Common myeloid progenitor, CD34-positive (primary cell): ENCODE measurements at regions of chr9 and their contacts with region 1.

Region 1: GRCh38 chr9:121545875-121546423 is 46.3 kb upstream of the GGTA1 start:
- DNase-seq: peak; percentile 81 to 87 (median 85)
- H3K4me3 ChIP-seq: peak overlapping the region in 3 of 7 experiments; percentile 6 to 20 (median 11)
- H3K27ac ChIP-seq: no peak overlapping the region
- H3K4me1 ChIP-seq: peaks cover 0 to 16% (median 14%) of the 10 kb centered on the region in 4 experiments
- H3K27me3 ChIP-seq: peaks cover 0 to 5% (median 0%) of the 10 kb centered on the region in 5 experiments

Region 2: GRCh38 chr9:121557581-121558447 is 11.9 kb after region 1 on chr9:
- CTCF ChIA-PET with region 1: interaction called, 26 read pairs
- POLR2A ChIA-PET with region 1: interaction called, 9 read pairs
- DNase-seq: peak; percentile 81 to 96 (median 95)
- H3K4me3 ChIP-seq: peak overlapping the region in 4 of 7 experiments; percentile 32 to 58 (median 40)
- H3K27ac ChIP-seq: no peak overlapping the region
- H3K4me1 ChIP-seq: peaks cover 0 to 35% (median 25%) of the 10 kb centered on the region in 4 experiments
- H3K27me3 ChIP-seq: no peaks in the 10 kb centered on the region

Region 3: GRCh38 chr9:121621113-121621449 is 75.1 kb after region 1 on chr9:
- CTCF ChIA-PET with region 1: interaction called, 10 read pairs
- POLR2A ChIA-PET with region 1: no interaction called
- DNase-seq: peak; percentile 52 to 75 (median 73)
- H3K4me3 ChIP-seq: no peak overlapping the region
- H3K27ac ChIP-seq: no peak overlapping the region
- H3K4me1 ChIP-seq: peaks cover 0 to 10% (median 5%) of the 10 kb centered on the region in 4 experiments
- H3K27me3 ChIP-seq: no peaks in the 10 kb centered on the region

Region 4: DNA sequence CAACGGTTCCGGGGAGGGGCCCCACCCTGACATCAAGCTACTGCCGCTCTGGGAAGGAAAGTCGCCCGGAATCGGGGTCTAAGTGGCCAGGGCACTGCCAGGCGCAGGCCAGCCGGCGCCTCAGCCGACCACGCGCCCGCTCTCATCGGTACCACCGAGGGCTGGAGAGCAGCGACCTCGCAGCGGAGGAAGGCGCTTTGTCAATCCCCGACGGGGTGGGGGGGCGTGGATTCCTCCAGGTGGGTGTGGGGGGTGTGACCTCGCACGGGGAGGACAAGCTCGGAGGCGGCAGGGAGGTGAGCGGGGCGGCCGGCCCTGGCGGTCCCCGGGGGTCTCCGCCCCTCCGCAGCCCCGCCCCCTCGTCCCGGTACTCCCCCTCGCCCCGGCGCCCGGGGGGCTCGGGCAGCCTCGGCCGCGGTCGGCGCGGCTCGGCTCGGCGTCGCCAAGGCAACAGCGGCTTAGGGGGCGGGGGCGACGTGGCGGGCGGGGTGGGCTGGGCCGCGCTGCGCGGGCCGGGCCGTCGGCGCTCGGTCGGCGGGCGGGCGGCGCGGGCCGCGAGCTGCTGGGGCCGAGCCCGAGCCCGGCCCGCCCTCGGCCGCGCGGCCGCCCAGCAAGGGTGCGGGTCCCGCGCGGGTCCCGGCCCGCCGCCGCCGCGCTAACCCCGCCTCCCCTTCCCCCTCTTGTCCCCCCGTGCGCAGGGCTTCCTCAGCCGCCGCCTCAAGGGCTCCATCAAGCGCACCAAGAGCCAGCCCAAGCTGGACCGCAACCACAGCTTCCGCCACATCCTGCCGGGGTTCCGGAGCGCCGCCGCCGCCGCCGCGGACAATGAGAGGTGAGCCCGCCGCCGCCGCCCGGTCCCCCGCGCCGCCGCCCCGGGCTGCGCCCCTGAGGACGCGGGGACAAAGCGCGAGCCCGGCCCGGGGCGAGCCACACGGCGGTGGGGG is 152.9 kb after region 1 on chr9:
- CTCF ChIA-PET with region 1: interaction called, 10 read pairs
- POLR2A ChIA-PET with region 1: no interaction called
- DNase-seq: peak; percentile 84 to 95 (median 93)
- H3K4me3 ChIP-seq: peak overlapping the region in 5 of 7 experiments; percentile 40 to 66 (median 53)
- H3K27ac ChIP-seq: no peak overlapping the region
- H3K4me1 ChIP-seq: peaks cover 5 to 37% (median 32%) of the 10 kb centered on the region in 4 experiments
- H3K27me3 ChIP-seq: peaks cover 0 to 66% (median 31%) of the 10 kb centered on the region in 5 experiments